Tibial artery (tissue), 4 donors: ENCODE measurements at regions of chr3 and their contacts with region 1.

Region 1: GRCh38 chr3:124995460-124995994 is 60.3 kb downstream of the HEG1 start:
- DNase-seq: peak; percentile 68 to 72
- H3K4me3 ChIP-seq: no peak overlapping the region
- H3K27ac ChIP-seq: no peak overlapping the region
- H3K4me1 ChIP-seq: peaks cover 0 to 4% (median 0%) of the 10 kb centered on the region in 4 donors
- H3K27me3 ChIP-seq: no peaks in the 10 kb centered on the region
- CTCF ChIP-seq: peak; percentile 72 to 73

Region 2: DNA sequence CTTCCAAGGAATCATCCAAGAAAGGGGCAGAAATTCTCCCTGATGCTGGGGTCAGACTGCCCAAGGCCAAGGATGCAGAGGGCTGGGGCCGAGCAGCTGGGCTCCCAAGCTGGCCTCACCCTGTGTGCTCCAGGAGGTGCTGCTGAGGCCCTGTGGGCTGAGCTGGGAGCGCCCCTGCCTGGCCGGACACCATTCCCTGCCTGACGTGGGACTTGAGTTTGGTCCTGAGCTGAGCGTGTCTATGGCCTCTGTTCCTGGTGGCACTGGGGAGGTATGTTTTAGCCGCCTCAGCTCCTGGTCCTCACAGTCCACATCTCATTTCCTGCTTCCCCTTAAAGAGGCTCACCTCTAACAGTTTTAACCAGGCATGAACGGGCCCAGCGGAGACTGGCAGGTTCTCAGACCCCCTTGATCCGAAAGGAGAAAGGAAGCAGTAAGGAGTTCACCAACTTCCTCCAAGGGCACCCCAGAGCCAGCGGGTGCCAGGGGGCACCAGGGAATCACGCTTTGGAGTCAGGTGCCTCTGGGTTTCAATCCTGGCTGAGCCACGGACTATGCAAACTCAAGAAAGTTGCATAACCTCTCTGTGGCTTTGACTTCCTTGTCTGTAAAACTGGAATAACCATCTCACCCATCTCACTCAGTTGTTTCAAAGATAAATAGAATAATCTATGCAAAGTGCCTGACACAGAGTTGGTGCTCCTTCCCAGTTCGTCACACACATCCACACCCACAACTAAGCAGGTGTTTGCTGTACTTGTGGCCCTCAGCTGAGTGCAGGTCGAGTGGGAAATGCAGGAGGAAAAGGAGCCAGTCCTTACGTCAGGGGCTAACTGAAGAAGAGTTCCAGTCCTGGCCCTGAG is 168.4 kb after region 1 on chr3:
- intact Hi-C with region 1: loop called (anchors 5 kb)
- DNase-seq: no peak
- H3K4me3 ChIP-seq: no peak overlapping the region
- H3K27ac ChIP-seq: no peak overlapping the region
- H3K4me1 ChIP-seq: peaks cover 0 to 5% (median 2%) of the 10 kb centered on the region in 4 donors
- H3K27me3 ChIP-seq: no peaks in the 10 kb centered on the region
- CTCF ChIP-seq: no peak

Region 3: GRCh38 chr3:125437631-125438435 is 442.3 kb after region 1 on chr3:
- intact Hi-C with region 1: loop called (anchors 5 kb)
- DNase-seq: peak in 1 of 2 donors; percentile 53
- H3K4me3 ChIP-seq: no peak overlapping the region
- H3K27ac ChIP-seq: no peak overlapping the region
- H3K4me1 ChIP-seq: peaks cover 0 to 13% (median 0%) of the 10 kb centered on the region in 4 donors
- H3K27me3 ChIP-seq: no peaks in the 10 kb centered on the region
- CTCF ChIP-seq: peak; percentile 85 to 92